ENCODE measurements at regions of chr1 and their contacts with region 1.

Region 1: DNA sequence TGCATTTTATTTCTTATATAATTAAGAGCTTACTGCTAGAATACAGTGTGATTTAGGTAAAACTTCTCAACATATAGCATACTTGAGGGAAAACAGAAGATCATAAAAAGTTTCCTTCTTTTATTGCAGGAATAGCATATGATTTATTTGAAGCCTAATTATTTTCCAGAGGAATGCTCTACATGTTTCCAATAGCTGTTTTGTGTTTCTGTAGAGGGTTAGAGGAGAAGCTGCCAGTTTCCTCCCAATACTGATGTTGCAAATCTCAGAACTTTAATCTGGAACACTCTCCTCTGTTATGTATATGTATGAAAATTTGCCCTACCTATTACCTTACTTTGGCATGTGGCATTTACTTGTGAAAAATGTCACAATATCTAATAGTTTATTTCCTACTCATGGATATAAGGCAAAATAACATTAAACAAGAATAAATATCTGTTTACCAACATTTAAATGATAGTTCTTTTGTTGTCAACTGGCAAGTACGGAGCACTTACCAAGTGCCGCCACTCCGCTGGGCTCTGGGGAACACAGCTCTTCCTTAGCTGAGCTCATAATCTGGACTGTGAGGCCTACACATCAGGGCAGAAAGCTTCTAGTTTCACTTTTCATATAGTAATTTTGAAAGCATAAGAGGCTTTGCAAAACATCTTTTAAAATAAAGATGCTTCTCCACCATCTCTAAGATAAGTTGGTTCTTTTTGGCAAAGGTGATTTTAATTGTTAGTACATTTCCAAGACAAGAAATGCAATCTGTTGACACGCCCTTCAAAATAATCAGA is 239.8 kb upstream of the C1orf105 start:
- DNase-seq: peak; percentile 66
- H3K4me3 Mint-ChIP-seq: peak overlapping the region; percentile 74
- H3K27ac Mint-ChIP-seq: peak overlapping the region; percentile 95
- H3K4me1 Mint-ChIP-seq: peaks cover 45% of the 10 kb centered on the region
- H3K27me3 Mint-ChIP-seq: no peaks in the 10 kb centered on the region

Region 2: DNA sequence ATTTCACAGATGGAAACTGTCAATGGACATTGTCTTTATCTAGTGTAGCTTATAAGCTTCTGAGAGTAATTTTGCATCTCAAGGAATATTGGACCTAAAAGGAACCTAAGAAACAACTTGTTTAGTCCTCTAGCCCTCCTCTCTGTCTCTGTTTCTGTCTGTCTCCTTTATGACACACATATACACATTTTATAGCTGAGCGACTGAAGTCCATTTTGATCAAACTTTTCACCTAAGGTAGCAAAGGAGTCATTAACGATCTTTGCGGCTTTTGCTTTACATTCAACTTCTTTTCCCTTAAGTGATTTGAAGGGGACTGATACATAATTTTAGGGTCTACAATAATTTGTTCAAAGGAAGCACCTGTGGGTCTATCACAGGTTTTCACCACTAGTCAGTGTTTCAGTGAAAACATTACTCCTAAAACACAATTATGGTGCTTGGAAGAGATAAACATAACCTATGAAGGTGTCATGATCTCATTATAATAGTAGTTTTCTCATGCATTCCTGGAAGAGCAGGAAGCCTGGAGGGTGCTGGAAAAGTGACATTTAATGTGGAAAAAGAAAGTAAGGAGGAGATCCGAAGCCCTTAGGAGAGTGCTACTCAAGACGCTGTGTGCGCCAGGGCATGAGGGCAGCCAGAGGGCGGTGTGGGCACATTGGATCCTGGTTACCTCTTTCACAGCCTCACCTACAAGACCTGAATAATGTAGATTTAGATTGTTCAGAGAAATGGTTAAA is 90.8 kb before region 1 on chr1:
- CTCF ChIA-PET with region 1: interaction called, 5 read pairs
- POLR2A ChIA-PET with region 1: no interaction called
- intact Hi-C with region 1: loop called (anchors 1 kb)
- DNase-seq: peak; percentile 79
- H3K4me3 Mint-ChIP-seq: no peak overlapping the region
- H3K27ac Mint-ChIP-seq: no peak overlapping the region
- H3K4me1 Mint-ChIP-seq: peaks cover 2% of the 10 kb centered on the region
- H3K27me3 Mint-ChIP-seq: no peaks in the 10 kb centered on the region

Region 3: GRCh38 chr1:172154551-172154950 is 26.1 kb before region 1 on chr1:
- CTCF ChIA-PET with region 1: no interaction called
- POLR2A ChIA-PET with region 1: interaction called, 11 read pairs
- intact Hi-C with region 1: loop called (anchors 1 kb)
- DNase-seq: no peak
- H3K4me3 Mint-ChIP-seq: no peak overlapping the region
- H3K27ac Mint-ChIP-seq: peak overlapping the region; percentile 86
- H3K4me1 Mint-ChIP-seq: peaks cover 14% of the 10 kb centered on the region
- H3K27me3 Mint-ChIP-seq: no peaks in the 10 kb centered on the region

Region 4: GRCh38 chr1:172338295-172338735 is 157.6 kb after region 1 on chr1:
- CTCF ChIA-PET with region 1: interaction called, 3 read pairs
- POLR2A ChIA-PET with region 1: no interaction called
- intact Hi-C with region 1: loop called (anchors 1 kb)
- DNase-seq: peak; percentile 81
- H3K4me3 Mint-ChIP-seq: no peak overlapping the region
- H3K27ac Mint-ChIP-seq: peak overlapping the region; percentile 69
- H3K4me1 Mint-ChIP-seq: peaks cover 41% of the 10 kb centered on the region
- H3K27me3 Mint-ChIP-seq: no peaks in the 10 kb centered on the region

Region 5: GRCh38 chr1:172380441-172381244 is 199.9 kb after region 1 on chr1:
- CTCF ChIA-PET with region 1: interaction called, 3 read pairs
- POLR2A ChIA-PET with region 1: no interaction called
- intact Hi-C with region 1: loop called (anchors 1 kb)
- DNase-seq: peak; percentile 45
- H3K4me3 Mint-ChIP-seq: peak overlapping the region; percentile 48
- H3K27ac Mint-ChIP-seq: peak overlapping the region; percentile 83
- H3K4me1 Mint-ChIP-seq: peaks cover 28% of the 10 kb centered on the region
- H3K27me3 Mint-ChIP-seq: no peaks in the 10 kb centered on the region

Measured in activated CD4-positive, alpha-beta memory T cell treated with anti-CD3 and anti-CD28 coated beads for 36 hours (primary cell).